Activated CD4-positive, alpha-beta T cell treated with anti-CD3 and anti-CD28 coated beads for 36 hours (primary cell): ENCODE measurements at regions of chr10 and their contacts with region 1.

Region 1: DNA sequence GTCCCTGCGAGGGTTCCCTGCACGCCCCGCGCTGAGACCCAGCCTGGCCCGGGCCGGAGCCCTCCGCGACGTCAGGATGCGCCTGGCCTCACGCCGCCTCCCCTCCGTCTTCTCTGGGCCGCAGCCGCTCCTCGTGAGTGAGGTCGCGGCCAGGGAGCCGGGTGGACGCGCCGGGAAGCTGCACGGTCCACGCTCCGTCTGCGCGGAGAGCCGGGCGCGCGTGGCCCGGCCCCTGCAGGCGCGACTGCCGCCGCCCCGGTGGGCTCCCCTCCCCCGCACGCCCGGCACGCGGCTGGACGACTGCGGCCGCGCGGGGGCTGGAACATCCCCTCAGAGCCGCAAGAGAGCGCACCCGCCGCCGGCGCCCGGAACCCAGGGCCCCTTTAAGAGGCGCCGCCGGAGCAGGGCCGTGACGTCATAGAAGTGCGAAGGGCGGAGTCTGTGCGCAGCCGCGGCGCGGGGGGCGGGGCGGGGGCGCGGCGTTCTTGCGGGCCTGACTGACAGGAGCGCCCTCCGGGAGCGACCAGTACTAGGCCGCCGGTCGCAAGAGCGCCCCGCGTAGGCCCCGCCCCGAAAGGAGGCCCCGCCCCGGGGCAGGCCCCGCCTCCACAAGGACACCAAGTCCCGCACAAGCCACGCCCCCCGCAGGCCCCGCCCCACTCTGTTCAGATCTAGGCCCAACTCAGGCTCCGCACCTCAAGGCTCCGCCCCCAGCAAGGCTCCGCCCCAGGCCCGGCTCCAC is 445 bp upstream of the INPP5A start:
- DNase-seq: peak; percentile 100
- ATAC-seq: peak; percentile 89
- H3K4me3 Mint-ChIP-seq: peak overlapping the region; percentile 68
- H3K27ac Mint-ChIP-seq: no peak overlapping the region
- H3K4me1 Mint-ChIP-seq: peaks cover 49% of the 10 kb centered on the region
- H3K27me3 Mint-ChIP-seq: no peaks in the 10 kb centered on the region

Region 2: GRCh38 chr10:131900350-131901146 is 636.6 kb before region 1 on chr10 and contains the start of gene PPP2R2D:
- CTCF ChIA-PET with region 1: no interaction called
- POLR2A ChIA-PET with region 1: no interaction called
- intact Hi-C with region 1: loop called in 1 of 2 experiments (anchors 1 kb)
- DNase-seq: peak; percentile 97
- ATAC-seq: peak; percentile 83
- H3K4me3 Mint-ChIP-seq: peak within 1 kb of the TSS; percentile 93
- H3K27ac Mint-ChIP-seq: peak within 1 kb of the TSS; percentile 92
- H3K4me1 Mint-ChIP-seq: peaks cover 53% of the 10 kb centered on the region
- H3K27me3 Mint-ChIP-seq: peaks cover 7% of the 10 kb centered on the region
- total RNA-seq, gene PPP2R2D: 30.0 to 39.3 TPM

Region 3: DNA sequence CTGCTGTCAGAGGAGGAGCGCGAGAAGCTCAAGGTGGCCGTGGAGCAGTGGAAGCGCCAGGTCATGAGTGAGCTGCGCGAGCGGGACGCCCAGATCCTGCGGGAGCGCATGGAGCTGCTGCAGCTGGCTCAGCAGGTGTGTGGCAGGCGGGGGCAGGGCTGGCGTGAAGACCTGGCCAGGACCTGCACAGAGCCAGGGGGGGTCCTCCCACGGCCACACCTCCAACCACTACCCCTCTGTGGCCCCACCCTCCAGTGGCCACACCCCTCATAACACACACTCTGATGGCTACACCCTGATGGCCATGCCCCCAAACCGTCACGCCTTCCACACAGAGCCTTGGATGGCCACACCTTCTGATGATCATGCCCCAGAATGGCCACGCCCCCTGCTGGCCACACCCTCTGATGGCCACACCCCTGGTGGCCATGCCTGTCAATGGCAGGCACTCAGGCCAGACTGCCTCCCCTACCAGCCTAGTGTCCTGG is 373.8 kb before region 1 on chr10:
- CTCF ChIA-PET with region 1: no interaction called
- POLR2A ChIA-PET with region 1: no interaction called
- intact Hi-C with region 1: loop called in 1 of 2 experiments (anchors 1 kb)
- DNase-seq: peak; percentile 84
- ATAC-seq: peak; percentile 78
- H3K4me3 Mint-ChIP-seq: no peak overlapping the region
- H3K27ac Mint-ChIP-seq: no peak overlapping the region
- H3K4me1 Mint-ChIP-seq: peaks cover 20% of the 10 kb centered on the region
- H3K27me3 Mint-ChIP-seq: no peaks in the 10 kb centered on the region

Region 4: DNA sequence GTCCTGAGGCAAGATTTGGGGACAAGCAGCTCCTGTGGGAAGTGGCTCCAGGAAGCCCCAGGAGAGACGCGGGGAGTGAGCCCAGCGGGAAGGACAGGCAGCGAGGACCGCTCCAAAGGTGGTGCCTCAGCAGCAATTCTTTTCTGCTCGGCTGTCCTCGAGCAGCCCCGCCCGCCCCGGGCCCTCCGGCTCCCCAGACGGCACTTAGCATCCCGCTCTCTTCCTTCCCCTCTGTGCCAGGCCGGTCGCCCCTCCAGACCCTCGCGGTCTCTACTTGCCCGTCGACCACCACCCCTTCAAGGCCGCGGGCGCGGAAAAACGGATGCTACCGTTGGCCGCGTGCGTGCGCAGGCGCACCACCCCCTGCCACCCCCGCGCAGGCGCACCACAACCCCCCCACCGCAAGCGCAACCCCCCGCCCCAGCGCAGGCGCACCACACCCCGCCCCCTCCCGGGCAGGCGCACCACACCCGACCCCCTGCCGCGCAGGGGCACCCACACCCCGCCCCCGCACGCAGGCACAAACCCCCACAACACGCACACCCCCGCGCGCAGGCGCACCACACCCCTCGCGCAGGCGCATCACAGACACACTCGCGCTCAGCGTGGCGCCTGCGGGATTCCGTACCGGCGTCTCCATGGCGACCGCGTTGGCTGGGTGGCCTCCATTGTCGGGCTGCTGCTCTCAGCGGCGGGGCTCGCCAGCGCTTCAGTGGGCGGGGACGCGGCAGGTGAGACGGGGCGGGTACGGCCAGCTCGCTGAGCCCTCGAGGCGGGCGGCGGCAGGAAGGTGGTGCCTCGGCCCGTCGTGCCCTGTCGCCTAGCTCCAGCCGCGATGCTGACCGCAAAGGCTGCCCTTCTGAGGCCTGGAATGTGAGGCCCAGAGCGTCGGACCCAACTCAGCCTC is 205.4 kb before region 1 on chr10 and contains the start of gene LRRC27:
- CTCF ChIA-PET with region 1: no interaction called
- POLR2A ChIA-PET with region 1: no interaction called
- intact Hi-C with region 1: loop called (anchors 1 kb)
- DNase-seq: peak; percentile 99
- ATAC-seq: peak; percentile 86
- H3K4me3 Mint-ChIP-seq: peak within 1 kb of the TSS; percentile 80
- H3K27ac Mint-ChIP-seq: peak within 1 kb of the TSS; percentile 81
- H3K4me1 Mint-ChIP-seq: peaks cover 56% of the 10 kb centered on the region
- H3K27me3 Mint-ChIP-seq: no peaks in the 10 kb centered on the region
- total RNA-seq, gene LRRC27: 3.6 to 4.1 TPM

Region 5: GRCh38 chr10:132452631-132453469 is 84.3 kb before region 1 on chr10:
- CTCF ChIA-PET with region 1: interaction called, 5 read pairs
- POLR2A ChIA-PET with region 1: no interaction called
- intact Hi-C with region 1: loop called (anchors 1 kb)
- DNase-seq: peak; percentile 94
- ATAC-seq: peak; percentile 88
- H3K4me3 Mint-ChIP-seq: no peak overlapping the region
- H3K27ac Mint-ChIP-seq: peak overlapping the region; percentile 8
- H3K4me1 Mint-ChIP-seq: peaks cover 18% of the 10 kb centered on the region
- H3K27me3 Mint-ChIP-seq: no peaks in the 10 kb centered on the region

Region 6: GRCh38 chr10:132961787-132962622 is 424.9 kb after region 1 on chr10:
- CTCF ChIA-PET with region 1: no interaction called
- POLR2A ChIA-PET with region 1: no interaction called
- intact Hi-C with region 1: loop called in 1 of 2 experiments (anchors 10 kb)
- DNase-seq: peak; percentile 90
- ATAC-seq: peak; percentile 82
- H3K4me3 Mint-ChIP-seq: peak overlapping the region; percentile 73
- H3K27ac Mint-ChIP-seq: peak overlapping the region; percentile 71
- H3K4me1 Mint-ChIP-seq: peaks cover 26% of the 10 kb centered on the region
- H3K27me3 Mint-ChIP-seq: peaks cover 26% of the 10 kb centered on the region

Region 7: DNA sequence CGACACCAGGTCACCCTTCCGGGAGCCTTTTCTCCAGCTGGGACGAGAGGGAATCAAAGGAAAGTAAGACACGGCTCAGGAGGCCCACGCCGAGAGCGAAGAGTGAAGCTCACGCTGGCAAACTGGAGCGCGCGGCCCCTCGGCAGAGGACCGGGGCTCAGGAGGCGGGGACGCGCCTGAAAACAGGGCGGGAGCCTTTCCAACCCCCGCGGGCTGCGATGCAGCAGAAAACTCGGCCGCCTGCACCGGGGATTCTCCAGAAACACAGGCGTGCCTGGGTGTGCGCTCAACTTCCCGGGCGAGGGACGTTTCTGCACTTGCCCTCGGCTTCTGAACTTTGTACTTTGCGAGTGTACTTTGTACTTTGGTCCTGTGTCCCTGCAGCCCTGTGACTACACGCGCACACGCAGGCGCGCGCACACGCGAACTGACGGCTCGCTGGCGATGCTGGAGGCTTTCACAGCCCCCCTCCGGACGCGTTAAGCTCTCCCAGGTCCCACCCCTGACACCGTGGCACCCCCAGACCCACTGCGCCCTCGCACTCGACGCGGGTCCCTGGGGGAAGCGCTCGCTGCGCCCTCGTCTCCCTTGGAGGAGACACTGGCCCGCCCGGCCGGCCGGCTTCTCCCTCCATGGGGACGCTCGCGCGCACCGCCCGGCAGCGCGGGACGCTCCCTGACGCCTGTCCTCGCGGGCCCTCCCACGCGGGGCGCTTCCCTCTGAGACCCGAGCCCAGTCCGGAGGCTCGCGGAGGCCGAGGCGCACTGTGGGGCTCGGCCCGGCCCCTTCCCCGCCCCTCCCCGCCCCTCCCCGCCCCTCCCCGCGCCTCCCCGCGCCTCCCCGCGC is 841.3 kb after region 1 on chr10:
- CTCF ChIA-PET with region 1: no interaction called
- POLR2A ChIA-PET with region 1: no interaction called
- intact Hi-C with region 1: loop called (anchors 2 to 5 kb)
- DNase-seq: peak; percentile 77
- ATAC-seq: peak; percentile 57
- H3K4me3 Mint-ChIP-seq: peak overlapping the region; percentile 74
- H3K27ac Mint-ChIP-seq: peak overlapping the region; percentile 24
- H3K4me1 Mint-ChIP-seq: peaks cover 4% of the 10 kb centered on the region
- H3K27me3 Mint-ChIP-seq: no peaks in the 10 kb centered on the region